ENCODE measurements at regions of chr9 and their contacts with region 1.

Region 1: GRCh38 chr9:77456829-77457437 is 191.2 kb downstream of the GNA14 start:
- DNase-seq: peak; percentile 87 to 90
- ATAC-seq: peak; percentile 81 to 89
- H3K4me3 ChIP-seq: no peak overlapping the region
- H3K27ac ChIP-seq: no peak overlapping the region
- H3K4me1 ChIP-seq: no peaks in the 10 kb centered on the region
- CTCF ChIP-seq: peak; percentile 69
- EP300 ChIP-seq: no peak
- POLR2A ChIP-seq: no peak
- RAD21 ChIP-seq: peak; percentile 38 to 39; a peak in 4 of 5 replicates

Region 2: GRCh38 chr9:77417566-77417965 is 39.4 kb before region 1 on chr9:
- CTCF ChIA-PET with region 1: interaction called, 11 read pairs
- POLR2A ChIA-PET with region 1: no interaction called
- DNase-seq: peak in 1 of 2 experiments; percentile 31
- ATAC-seq: peak; percentile 57 to 90
- H3K4me3 ChIP-seq: no peak overlapping the region
- H3K27ac ChIP-seq: peak overlapping the region in 1 of 2 experiments; percentile 43; a peak in 1 of 6 replicates
- H3K4me1 ChIP-seq: peaks cover 14% of the 10 kb centered on the region; the same call in 2 of the 3 replicates
- CTCF ChIP-seq: no peak
- EP300 ChIP-seq: no peak
- POLR2A ChIP-seq: no peak
- RAD21 ChIP-seq: no peak

Region 3: GRCh38 chr9:77469515-77470231 is 12.7 kb after region 1 on chr9:
- CTCF ChIA-PET with region 1: interaction called, 63 read pairs
- POLR2A ChIA-PET with region 1: no interaction called
- DNase-seq: no peak
- ATAC-seq: no peak
- H3K4me3 ChIP-seq: no peak overlapping the region
- H3K27ac ChIP-seq: no peak overlapping the region
- H3K4me1 ChIP-seq: 0 out of 3 replicates have a peak, but pooled peaks cover 5% of the 10 kb centered on the region
- CTCF ChIP-seq: no peak
- EP300 ChIP-seq: no peak
- POLR2A ChIP-seq: no peak
- RAD21 ChIP-seq: no peak

Region 4: GRCh38 chr9:77488439-77489126 is 31.6 kb after region 1 on chr9:
- CTCF ChIA-PET with region 1: interaction called, 41 read pairs
- POLR2A ChIA-PET with region 1: no interaction called
- DNase-seq: peak in 1 of 2 experiments; percentile 25
- ATAC-seq: peak; percentile 68 to 74; a peak in 5 of 6 replicates
- H3K4me3 ChIP-seq: no peak overlapping the region
- H3K27ac ChIP-seq: no peak overlapping the region
- H3K4me1 ChIP-seq: no peaks in the 10 kb centered on the region
- CTCF ChIP-seq: peak; percentile 50
- EP300 ChIP-seq: no peak
- POLR2A ChIP-seq: no peak
- RAD21 ChIP-seq: peak; percentile 57 to 65

Region 5: DNA sequence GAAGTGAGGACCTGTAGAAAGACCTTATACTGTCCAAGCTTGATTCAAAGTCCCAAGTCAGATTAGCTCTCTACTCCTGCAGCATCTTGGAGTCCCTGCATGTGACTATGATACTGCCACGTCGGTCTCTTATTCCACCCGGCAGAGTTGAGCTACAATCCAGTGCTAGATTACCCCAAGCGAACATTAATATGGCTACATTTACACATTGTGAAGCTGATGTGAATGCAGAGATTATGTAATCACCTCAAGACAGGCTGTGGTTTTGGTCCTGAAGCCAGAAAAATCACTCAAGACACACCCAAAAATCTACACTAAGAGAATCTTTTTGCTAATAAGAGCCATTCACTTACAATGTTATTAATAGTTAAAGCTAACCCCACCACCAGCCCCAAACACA is 74.5 kb after region 1 on chr9:
- CTCF ChIA-PET with region 1: no interaction called
- POLR2A ChIA-PET with region 1: no interaction called
- DNase-seq: no peak
- ATAC-seq: no peak
- H3K4me3 ChIP-seq: no peak overlapping the region
- H3K27ac ChIP-seq: no peak overlapping the region
- H3K4me1 ChIP-seq: no peaks in the 10 kb centered on the region
- CTCF ChIP-seq: no peak
- EP300 ChIP-seq: no peak
- POLR2A ChIP-seq: no peak
- RAD21 ChIP-seq: no peak

Region 6: DNA sequence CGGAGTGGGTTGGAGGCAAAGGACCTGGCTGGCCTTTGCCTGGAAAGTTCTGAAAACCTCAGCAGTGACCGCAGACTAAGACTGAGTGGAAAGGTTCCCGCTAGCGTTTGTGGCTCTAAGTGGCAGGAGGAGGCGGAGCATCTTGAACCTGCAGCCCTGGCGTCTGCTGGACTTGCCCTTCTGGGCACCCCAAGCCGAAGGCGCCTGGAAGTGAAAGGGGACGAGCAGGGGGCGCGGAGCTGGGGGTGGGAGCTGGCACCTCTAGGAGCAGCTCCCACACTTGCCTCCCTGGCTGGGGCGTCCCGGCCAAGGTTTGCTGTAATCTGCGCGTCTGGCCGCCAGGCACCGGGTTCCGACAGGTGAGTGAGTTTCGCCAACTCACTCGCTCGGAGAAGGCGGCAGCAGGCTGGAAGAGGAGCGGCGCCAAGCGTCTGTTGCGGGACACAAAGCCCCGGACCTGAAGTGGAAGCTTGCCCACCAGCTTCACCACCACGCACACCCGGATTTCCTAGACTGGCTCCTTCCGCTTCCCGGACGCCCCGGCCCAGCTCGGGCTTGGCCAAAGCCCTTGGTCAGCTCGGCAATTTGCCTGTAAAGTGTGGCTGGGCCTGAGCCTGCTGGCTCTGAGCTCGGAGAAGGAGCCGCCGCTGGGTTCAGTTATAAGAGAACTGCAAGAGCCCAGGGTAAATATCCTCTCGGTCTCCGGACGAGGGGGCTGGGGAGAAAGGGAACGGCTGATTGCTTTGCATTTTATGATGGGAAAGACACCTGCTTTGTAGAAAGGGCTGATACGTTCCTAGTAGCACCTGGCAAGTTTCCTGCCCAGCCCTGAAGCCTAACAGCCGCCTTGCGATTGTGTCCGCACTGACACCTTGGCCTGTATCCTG is 191.5 kb after region 1 on chr9 and contains the start of gene GNA14:
- CTCF ChIA-PET with region 1: interaction called, 10 read pairs
- POLR2A ChIA-PET with region 1: no interaction called
- DNase-seq: no peak
- ATAC-seq: no peak
- H3K4me3 ChIP-seq: no peak within 1 kb of the TSS
- H3K27ac ChIP-seq: no peak within 1 kb of the TSS
- H3K4me1 ChIP-seq: no peaks in the 10 kb centered on the region
- CTCF ChIP-seq: no peak
- EP300 ChIP-seq: no peak
- POLR2A ChIP-seq: no peak
- RAD21 ChIP-seq: no peak
- polyA plus RNA-seq, gene GNA14: 0.06 and 0.09 TPM in 2 replicates

Measured in A549 (cell line).